SK-N-SH (cell line): ENCODE measurements at regions of chr7 and their contacts with region 1.

Region 1: DNA sequence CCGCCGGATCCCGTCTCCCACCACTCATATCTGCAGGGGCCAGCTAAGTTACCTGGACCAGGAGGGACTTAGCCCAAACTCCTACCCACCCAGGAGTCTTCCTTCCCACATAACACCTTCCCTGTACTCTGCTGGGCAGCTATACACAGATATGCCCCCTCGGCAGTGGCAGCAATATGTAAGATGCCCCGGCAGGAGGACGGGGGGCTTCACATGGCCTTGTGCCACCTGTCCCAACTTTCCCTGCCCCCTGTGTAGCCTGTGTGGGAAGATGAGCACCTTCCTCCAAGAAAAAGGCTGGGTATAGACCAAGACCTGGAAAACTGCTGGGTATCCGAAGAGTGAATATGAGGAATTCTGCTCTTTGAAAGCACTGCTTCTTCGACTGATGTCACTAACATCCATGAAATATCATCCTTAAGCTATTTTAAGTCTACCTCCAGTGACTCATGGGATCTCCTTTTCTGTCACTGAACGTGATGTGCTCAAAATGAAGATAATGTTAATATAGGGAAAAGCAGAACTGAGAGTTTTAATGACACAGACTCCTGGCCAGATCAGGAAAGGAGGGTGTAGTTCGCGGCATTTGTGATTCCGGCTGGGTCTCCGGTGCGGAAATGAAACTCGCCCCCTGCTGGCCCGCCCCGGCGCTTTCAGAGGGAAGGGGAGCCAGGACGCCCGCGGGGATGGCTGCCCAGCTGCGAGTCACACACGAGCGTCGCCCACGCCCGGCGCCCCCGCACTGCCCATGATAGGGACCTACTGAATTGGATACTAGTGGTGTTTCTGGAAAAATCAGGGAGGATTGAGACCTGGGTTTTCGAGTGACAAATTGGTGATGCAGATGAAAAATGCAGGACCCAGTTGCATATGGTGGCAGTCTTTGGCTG is 256.9 kb upstream of the NFE2L3 start:
- DNase-seq: peak; percentile 86
- H3K4me3 ChIP-seq: peak overlapping the region; percentile 25 to 42; a peak in 3 of 4 replicates
- H3K27ac ChIP-seq: no peak overlapping the region
- H3K4me1 ChIP-seq: peaks cover 0 to 5% of the 10 kb centered on the region in 2 experiments; a peak in 2 of 4 replicates
- H3K27me3 ChIP-seq: peaks cover 5% of the 10 kb centered on the region; the same call in 1 of the 2 replicates
- CTCF ChIP-seq: peak; percentile 66
- EP300 ChIP-seq: no peak
- RAD21 ChIP-seq: peak; percentile 35

Region 2: GRCh38 chr7:25624833-25625232 is 270.3 kb before region 1 on chr7:
- CTCF ChIA-PET with region 1: no interaction called
- POLR2A ChIA-PET with region 1: no interaction called
- DNase-seq: no peak
- H3K4me3 ChIP-seq: no peak overlapping the region
- H3K27ac ChIP-seq: no peak overlapping the region
- H3K4me1 ChIP-seq: peaks cover 0 to 23% of the 10 kb centered on the region in 2 experiments; a peak in 2 of 4 replicates
- H3K27me3 ChIP-seq: no peaks in the 10 kb centered on the region
- CTCF ChIP-seq: no peak
- EP300 ChIP-seq: no peak
- RAD21 ChIP-seq: no peak

Region 3: DNA sequence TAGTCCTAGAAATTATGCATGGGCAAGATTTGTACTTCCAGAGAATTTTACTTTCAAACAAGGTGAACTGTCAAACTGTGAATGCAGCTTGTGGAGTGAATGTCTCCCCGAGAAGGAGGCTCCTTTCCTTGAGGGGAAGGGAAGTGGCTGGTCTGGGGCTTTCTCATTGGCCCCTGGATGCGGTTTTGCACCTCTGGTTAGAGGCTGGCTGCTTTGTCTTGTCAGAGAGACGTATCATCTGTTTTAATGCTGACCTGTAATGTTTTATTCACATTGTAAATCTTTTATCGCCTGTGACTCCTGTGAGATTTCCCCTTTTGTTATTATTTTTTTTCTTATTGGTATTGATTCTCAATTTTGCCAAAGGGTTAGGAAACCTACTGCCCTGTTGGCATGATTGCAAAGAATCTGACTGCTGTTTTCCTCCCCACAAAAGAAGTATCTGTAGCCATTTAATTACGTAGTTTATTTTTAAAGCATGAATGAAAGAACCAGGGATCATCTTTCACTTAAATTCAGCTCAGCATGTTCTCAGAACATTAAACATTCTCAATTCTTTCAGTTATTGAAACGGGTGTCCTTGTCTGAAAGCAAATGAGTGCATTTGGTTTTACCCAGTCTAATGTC is 18.6 kb after region 1 on chr7:
- CTCF ChIA-PET with region 1: interaction called, 91 read pairs
- POLR2A ChIA-PET with region 1: no interaction called
- DNase-seq: no peak
- H3K4me3 ChIP-seq: no peak overlapping the region
- H3K27ac ChIP-seq: no peak overlapping the region
- H3K4me1 ChIP-seq: no peaks in the 10 kb centered on the region
- H3K27me3 ChIP-seq: 0 out of 2 replicates have a peak, but pooled peaks cover 5% of the 10 kb centered on the region
- CTCF ChIP-seq: no peak
- EP300 ChIP-seq: no peak
- RAD21 ChIP-seq: no peak

Region 4: DNA sequence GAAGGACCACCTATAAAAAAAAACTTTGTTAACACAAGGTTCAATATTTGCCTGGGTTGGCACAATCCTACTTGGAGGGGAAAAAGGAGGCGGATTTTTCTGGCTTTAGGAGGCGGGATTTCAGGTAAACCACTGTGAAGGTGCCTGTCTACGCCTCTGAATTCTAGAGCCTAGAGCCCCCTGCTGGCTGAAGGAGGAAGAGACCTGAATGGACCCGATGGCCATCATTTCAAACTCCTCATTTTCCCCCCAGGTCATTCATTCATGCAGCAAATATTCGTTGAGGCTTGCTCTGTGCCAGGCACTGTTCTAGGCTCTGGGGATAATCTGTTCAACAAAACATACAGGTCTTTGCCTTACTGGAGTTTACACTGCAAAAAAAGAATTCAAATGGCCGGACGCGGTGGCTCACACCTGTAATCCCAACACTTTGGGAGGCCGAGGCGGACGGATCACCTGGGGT is 166.6 kb after region 1 on chr7:
- CTCF ChIA-PET with region 1: interaction called, 71 read pairs
- POLR2A ChIA-PET with region 1: no interaction called
- DNase-seq: peak; percentile 72
- H3K4me3 ChIP-seq: peak overlapping the region in 1 of 2 experiments; percentile 33; a peak in 1 of 4 replicates
- H3K27ac ChIP-seq: no peak overlapping the region
- H3K4me1 ChIP-seq: peaks cover 0 to 5% of the 10 kb centered on the region in 2 experiments; a peak in 1 of 4 replicates
- H3K27me3 ChIP-seq: peaks cover 23% of the 10 kb centered on the region; the same call in 1 of the 2 replicates
- CTCF ChIP-seq: peak; percentile 94
- EP300 ChIP-seq: no peak
- RAD21 ChIP-seq: peak; percentile 70

Region 5: DNA sequence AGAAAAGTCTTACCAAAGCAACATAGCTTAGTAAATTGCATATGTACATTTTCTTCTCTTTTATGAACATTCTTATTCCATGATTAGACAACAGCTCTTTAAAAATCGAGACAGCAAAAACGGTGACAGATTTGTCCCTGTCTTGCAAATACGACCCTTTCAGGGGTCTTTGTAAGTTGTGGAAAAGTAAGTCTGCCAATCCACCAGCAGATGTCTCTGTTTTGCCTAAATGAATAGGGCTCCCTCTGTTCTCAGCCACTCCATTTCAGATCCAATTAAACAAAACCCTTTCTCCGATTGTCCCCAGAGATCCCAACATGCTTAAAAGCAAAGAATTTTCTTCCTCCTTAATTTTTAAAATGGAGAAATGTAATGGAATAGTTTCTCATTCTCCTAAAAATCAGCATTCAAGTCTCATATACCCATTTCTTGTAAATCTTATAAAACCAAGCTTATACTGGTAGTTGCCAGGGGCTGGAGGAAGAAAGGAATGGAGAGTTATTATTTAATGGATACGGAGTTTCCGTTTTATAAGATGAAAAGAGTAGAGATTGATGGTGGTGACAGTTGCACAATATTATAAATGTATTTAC is 195.9 kb after region 1 on chr7:
- CTCF ChIA-PET with region 1: interaction called, 75 read pairs
- POLR2A ChIA-PET with region 1: no interaction called
- DNase-seq: peak; percentile 80
- H3K4me3 ChIP-seq: no peak overlapping the region
- H3K27ac ChIP-seq: no peak overlapping the region
- H3K4me1 ChIP-seq: peaks cover 0 to 2% of the 10 kb centered on the region in 2 experiments; a peak in 2 of 4 replicates
- H3K27me3 ChIP-seq: no peaks in the 10 kb centered on the region
- CTCF ChIP-seq: peak; percentile 97
- EP300 ChIP-seq: no peak
- RAD21 ChIP-seq: peak; percentile 94

Region 6: DNA sequence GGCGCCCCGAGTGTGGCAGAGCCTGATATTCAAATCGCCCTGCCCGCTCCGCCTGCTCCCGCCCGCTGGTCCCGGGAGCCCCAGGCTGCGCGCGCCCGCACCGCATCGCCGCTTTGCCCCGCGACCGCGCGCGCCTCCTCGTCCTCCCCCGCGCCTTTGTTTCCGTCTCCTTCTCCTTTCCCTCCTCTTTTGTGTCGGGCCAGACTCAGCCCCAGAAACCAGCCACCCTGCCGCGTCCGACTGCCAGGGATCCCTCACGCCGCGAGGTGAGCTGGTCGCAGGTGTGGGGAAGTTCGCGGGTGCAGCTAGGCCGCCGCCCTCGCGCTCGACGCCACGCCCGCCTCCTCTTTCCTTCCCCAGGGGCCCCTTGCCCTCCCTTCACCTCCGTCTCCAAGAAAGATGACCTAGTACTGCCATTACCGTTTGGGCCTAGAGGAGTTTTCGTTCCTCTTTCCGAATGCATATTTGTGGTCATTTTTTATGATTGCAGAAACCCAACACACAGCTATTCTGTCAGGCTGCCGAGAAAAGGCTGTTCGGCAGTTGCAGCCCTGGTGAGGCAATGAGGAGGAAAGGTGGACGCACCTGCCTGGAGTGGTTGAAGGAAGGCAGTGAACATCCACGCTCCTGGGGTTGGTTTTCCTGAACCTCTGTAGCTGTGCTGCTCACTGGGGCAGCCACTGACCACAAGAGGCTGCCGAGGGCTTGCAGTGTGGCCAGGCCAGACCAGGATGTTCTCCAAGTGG is 503.8 kb after region 1 on chr7:
- CTCF ChIA-PET with region 1: interaction called, 14 read pairs
- POLR2A ChIA-PET with region 1: no interaction called
- DNase-seq: peak; percentile 83
- H3K4me3 ChIP-seq: peak overlapping the region; percentile 58 to 63
- H3K27ac ChIP-seq: peak overlapping the region in 1 of 2 experiments; percentile 74; a peak in 2 of 4 replicates
- H3K4me1 ChIP-seq: peaks cover 0 to 21% of the 10 kb centered on the region in 2 experiments; a peak in 1 of 4 replicates
- H3K27me3 ChIP-seq: peaks cover 10% of the 10 kb centered on the region; the same call in 1 of the 2 replicates
- CTCF ChIP-seq: no peak
- EP300 ChIP-seq: no peak
- RAD21 ChIP-seq: peak; percentile 72

Region 7: GRCh38 chr7:26686448-26686981 is 791.4 kb after region 1 on chr7:
- CTCF ChIA-PET with region 1: interaction called, 41 read pairs
- POLR2A ChIA-PET with region 1: no interaction called
- DNase-seq: peak; percentile 17
- H3K4me3 ChIP-seq: no peak overlapping the region; a peak in 1 of 4 replicates
- H3K27ac ChIP-seq: no peak overlapping the region
- H3K4me1 ChIP-seq: peaks cover 0 to 5% of the 10 kb centered on the region in 2 experiments; a peak in 2 of 4 replicates
- H3K27me3 ChIP-seq: peaks cover 9% of the 10 kb centered on the region
- CTCF ChIP-seq: peak; percentile 98
- EP300 ChIP-seq: no peak
- RAD21 ChIP-seq: peak; percentile 83